Calu3 (cell line): ENCODE measurements at regions of chr5 and their contacts with region 1.

Region 1: GRCh38 chr5:140547508-140548299 is at the start of gene EIF4EBP3:
- DNase-seq: peak; percentile 90
- H3K4me3 Mint-ChIP-seq: peak within 1 kb of the TSS; percentile 38
- H3K27ac Mint-ChIP-seq: peak within 1 kb of the TSS; percentile 49
- H3K4me1 Mint-ChIP-seq: peaks cover 21% of the 10 kb centered on the region
- H3K27me3 Mint-ChIP-seq: no peaks in the 10 kb centered on the region
- CTCF ChIP-seq: peak; percentile 42
- total RNA-seq, gene EIF4EBP3: 14.1 and 18.8 TPM in 2 replicates

Region 2: GRCh38 chr5:140424135-140424534 is 123.6 kb before region 1 on chr5:
- CTCF ChIA-PET with region 1: no interaction called
- intact Hi-C with region 1: no loop called
- DNase-seq: no peak
- H3K4me3 Mint-ChIP-seq: no peak overlapping the region
- H3K27ac Mint-ChIP-seq: no peak overlapping the region
- H3K4me1 Mint-ChIP-seq: peaks cover 13% of the 10 kb centered on the region
- H3K27me3 Mint-ChIP-seq: no peaks in the 10 kb centered on the region
- CTCF ChIP-seq: no peak

Region 3: DNA sequence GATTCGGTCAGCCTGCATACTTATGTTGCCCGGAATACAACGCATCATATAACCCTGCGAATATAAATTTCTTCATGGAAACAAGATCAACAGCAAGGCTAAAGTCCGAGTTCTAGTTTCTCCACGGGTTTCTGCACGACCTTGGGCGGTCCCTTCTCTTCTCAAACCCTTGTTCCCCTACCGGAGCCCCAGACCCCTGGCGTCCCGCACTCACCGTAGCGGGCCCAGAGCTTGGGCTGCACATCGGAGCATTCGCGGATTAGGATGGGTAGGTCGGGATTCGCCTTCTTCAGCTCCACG is 99.3 kb after region 1 on chr5:
- CTCF ChIA-PET with region 1: interaction called, 12 read pairs
- intact Hi-C with region 1: no loop called
- DNase-seq: no peak
- H3K4me3 Mint-ChIP-seq: peak overlapping the region; percentile 91
- H3K27ac Mint-ChIP-seq: peak overlapping the region; percentile 89
- H3K4me1 Mint-ChIP-seq: peaks cover 10% of the 10 kb centered on the region
- H3K27me3 Mint-ChIP-seq: no peaks in the 10 kb centered on the region
- CTCF ChIP-seq: no peak